Panc1 (cell line): ENCODE measurements at regions of chr19 and their contacts with region 1.

Region 1: DNA sequence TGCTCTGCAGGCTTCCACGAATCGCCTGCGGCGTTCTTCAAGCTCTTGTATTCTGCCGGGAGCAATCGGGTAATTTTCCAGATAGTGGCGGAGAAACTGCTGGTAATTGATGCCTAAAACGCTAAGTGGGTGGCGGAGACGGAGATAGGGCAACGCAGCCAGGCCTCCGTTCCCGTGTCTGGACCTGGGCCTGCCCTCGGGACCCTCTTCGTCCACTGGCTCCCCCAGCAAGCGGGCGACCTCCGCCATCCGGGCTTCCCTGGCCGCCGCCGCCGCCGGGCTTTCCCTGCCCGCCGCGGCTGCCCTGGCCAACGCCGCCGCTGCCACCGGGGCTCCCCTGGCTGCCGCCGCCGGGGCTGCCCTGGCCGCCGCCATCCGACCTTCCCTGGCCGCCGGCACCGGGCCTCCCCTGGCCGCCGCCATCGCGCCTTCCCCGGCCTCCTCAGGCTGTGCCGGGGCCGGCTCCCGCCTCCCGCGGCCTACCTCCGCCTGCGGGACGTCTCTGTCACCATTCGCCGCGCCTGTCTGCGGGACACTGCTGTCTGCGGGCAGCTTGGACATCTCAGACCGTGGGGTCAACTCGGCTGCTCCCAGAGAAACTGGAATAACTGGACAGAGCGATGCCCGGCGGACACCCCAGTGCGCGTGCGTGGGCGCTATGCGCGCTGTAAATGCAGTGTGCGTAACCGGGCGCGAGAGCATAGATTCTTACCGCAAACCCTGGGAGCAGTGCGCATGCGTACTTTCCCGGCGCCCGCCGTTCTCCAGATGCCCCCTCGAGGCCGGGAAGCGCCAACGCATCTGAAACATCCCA is at the start of gene EID2:
- DNase-seq: peak; percentile 100
- ATAC-seq: peak; percentile 97
- H3K4me3 ChIP-seq: peak within 1 kb of the TSS; percentile 36 to 59
- H3K27ac ChIP-seq: peak within 1 kb of the TSS; percentile 78
- H3K4me1 ChIP-seq: peaks cover 26% of the 10 kb centered on the region
- H3K27me3 ChIP-seq: peaks cover 11% of the 10 kb centered on the region
- CTCF ChIP-seq: no peak
- total RNA-seq, gene EID2: 163 TPM

Region 2: DNA sequence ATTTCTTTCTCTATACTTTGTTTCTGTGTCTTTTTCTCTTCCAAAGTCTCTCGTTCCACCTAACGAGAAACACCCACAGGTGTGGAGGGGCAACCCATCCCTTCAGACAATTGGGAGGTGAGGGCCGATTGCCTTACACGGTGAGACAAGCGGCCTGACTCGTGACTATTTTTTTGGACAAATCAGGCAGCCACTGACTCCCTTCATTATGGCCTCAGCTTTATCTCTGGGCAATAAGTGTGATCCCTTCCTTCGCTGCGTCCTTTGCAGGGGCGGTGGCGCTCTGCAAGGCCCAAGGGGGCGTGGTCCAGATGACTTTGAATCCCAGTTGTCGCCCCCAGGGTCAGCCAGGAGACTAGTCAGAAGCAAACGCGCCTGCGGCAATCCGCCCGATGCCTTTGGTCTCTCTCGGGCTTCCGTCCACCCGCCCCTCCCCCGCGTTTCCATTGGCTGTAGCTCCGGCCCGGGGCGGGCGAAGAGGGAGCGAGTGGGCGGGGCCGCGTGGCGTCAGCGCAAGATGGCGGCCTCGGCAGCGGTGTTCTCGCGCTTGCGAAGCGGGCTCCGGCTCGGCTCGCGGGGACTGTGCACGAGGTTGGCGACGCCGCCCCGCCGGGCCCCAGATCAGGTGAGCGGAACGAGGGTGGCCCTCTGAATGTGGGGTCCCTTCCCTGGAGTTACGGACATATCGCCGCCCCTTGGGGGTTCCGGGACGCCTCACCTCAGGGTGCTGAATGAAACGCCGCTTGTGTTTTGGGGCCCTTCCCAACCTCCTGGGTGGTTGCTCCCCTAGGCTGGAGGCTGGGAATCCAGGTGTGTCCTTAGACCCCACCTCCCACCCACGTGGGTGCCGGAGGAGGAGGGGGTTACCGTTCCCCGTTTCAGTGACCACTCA is 59.1 kb before region 1 on chr19 and contains the start of gene TIMM50:
- CTCF ChIA-PET with region 1: interaction called, 134 read pairs
- POLR2A ChIA-PET with region 1: interaction called, 11 read pairs
- in situ Hi-C with region 1: no loop called
- intact Hi-C with region 1: no loop called
- DNase-seq: peak; percentile 100
- ATAC-seq: peak; percentile 96
- H3K4me3 ChIP-seq: peak within 1 kb of the TSS; percentile 39 to 55
- H3K27ac ChIP-seq: peak within 1 kb of the TSS; percentile 86
- H3K4me1 ChIP-seq: peaks cover 23% of the 10 kb centered on the region
- H3K27me3 ChIP-seq: no peaks in the 10 kb centered on the region
- CTCF ChIP-seq: no peak
- total RNA-seq, gene TIMM50: 1,837 TPM

Region 3: GRCh38 chr19:39524495-39524894 is 15.2 kb before region 1 on chr19:
- CTCF ChIA-PET with region 1: interaction called, 45 read pairs
- POLR2A ChIA-PET with region 1: interaction called, 4 read pairs
- in situ Hi-C with region 1: no loop called
- intact Hi-C with region 1: no loop called
- DNase-seq: no peak
- ATAC-seq: peak; percentile 1; the same call in 1 of the 2 replicates
- H3K4me3 ChIP-seq: no peak overlapping the region
- H3K27ac ChIP-seq: no peak overlapping the region
- H3K4me1 ChIP-seq: peaks cover 3% of the 10 kb centered on the region; the same call in 1 of the 2 replicates
- H3K27me3 ChIP-seq: no peaks in the 10 kb centered on the region
- CTCF ChIP-seq: no peak

Region 4: DNA sequence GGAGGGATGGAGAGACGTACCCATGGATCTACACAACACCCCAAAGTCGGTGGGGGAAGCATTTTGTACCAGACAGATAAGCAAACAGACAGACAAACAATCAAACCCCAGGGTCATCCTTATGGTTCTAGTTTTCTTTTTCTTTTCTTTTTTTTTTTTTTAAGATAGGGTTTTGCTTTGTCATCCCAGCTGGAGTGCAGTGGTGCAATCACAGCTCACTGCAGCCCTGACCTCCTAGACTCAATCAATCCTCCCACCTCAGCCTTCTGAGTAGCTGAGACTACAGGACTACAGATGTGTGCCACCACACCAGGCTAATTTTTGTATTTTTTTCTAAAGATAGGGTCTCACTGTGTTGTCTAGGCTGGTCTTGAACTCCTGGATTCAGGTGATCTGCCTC is 324.4 kb after region 1 on chr19:
- CTCF ChIA-PET with region 1: no interaction called
- POLR2A ChIA-PET with region 1: no interaction called
- in situ Hi-C with region 1: loop called (anchors 10 kb)
- intact Hi-C with region 1: no loop called
- DNase-seq: no peak
- ATAC-seq: no peak
- H3K4me3 ChIP-seq: no peak overlapping the region
- H3K27ac ChIP-seq: no peak overlapping the region
- H3K4me1 ChIP-seq: peaks cover 4% of the 10 kb centered on the region
- H3K27me3 ChIP-seq: peaks cover 12% of the 10 kb centered on the region; the same call in 1 of the 2 replicates
- CTCF ChIP-seq: no peak